Body of pancreas (tissue), 4 donors: ENCODE measurements at regions of chrX and their contacts with region 1.

Region 1: DNA sequence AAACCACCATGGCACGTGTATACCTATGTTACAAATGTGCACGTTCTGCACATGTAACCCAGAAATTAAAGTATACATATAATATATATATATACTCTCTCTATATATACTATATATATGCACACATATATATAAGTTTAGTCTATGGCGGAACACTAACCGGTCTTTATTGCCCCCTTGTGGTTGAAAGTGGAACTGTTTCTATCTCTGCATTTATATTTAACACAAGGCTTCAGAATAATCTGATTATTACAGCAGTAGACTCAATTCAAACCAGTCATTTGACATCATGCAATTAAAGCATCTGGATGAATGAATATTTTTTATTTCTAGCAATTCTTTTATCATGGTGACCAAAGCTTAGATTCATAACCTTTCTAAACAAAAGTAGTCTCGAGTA is 14.6 kb downstream of the RAB9B start:
- DNase-seq: peak in 1 of 4 donors; percentile 12
- ATAC-seq: no peak
- H3K4me3 ChIP-seq: no peak overlapping the region
- H3K27ac ChIP-seq: no peak overlapping the region
- H3K4me1 ChIP-seq: no peaks in the 10 kb centered on the region
- H3K27me3 ChIP-seq: no peaks in the 10 kb centered on the region
- CTCF ChIP-seq: peak; percentile 52 to 81 (median 58)
- POLR2A ChIP-seq: no peak

Region 2: GRCh38 chrX:103538734-103539141 is 278.8 kb before region 1 on chrX:
- intact Hi-C with region 1: loop called (anchors 5 kb)
- DNase-seq: peak in 2 of 4 donors; percentile 6 to 12
- ATAC-seq: peak; percentile 68
- H3K4me3 ChIP-seq: no peak overlapping the region
- H3K27ac ChIP-seq: no peak overlapping the region
- H3K4me1 ChIP-seq: no peaks in the 10 kb centered on the region
- H3K27me3 ChIP-seq: no peaks in the 10 kb centered on the region
- CTCF ChIP-seq: no peak
- POLR2A ChIP-seq: no peak

Region 3: DNA sequence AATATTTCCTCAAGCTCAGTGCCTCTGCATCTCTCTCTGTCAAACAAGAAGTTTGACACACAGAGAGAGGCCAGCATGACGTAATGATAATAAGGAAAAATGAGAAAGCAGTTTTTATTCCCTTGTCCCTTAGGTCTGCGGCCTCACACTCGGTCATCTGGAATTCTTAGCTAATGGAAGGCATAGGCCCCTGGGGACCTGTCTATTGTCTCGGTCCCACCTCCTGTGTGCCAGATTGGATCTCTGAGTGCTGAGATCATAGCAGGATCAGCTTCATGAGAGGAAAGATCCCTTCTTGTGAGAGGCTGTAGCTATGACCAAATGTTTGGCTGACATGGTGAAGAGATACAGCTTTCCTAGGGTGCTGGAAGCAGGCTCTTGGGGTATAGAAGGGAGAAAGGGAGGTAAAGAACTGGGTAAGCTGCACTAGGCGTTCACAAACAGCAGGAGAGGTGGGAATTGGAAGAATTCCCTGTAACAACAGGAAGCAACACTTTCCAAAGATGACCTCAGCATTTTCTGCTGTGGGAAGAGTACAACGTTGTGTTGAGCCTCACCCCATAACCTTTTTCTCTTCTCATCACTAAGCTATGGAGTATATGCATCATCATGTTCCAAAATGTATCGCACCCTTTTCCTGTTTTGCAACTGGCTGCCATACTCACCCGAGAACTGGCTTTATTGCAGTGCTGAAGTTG is 86.6 kb before region 1 on chrX:
- intact Hi-C with region 1: no loop called
- DNase-seq: peak in 1 of 4 donors; percentile 2
- ATAC-seq: no peak
- H3K4me3 ChIP-seq: no peak overlapping the region
- H3K27ac ChIP-seq: no peak overlapping the region
- H3K4me1 ChIP-seq: no peaks in the 10 kb centered on the region
- H3K27me3 ChIP-seq: no peaks in the 10 kb centered on the region
- CTCF ChIP-seq: no peak
- POLR2A ChIP-seq: no peak

Region 4: GRCh38 chrX:104047171-104047570 is 229.7 kb after region 1 on chrX:
- intact Hi-C with region 1: no loop called
- DNase-seq: no peak
- ATAC-seq: no peak
- H3K4me3 ChIP-seq: no peak overlapping the region
- H3K27ac ChIP-seq: no peak overlapping the region
- H3K4me1 ChIP-seq: no peaks in the 10 kb centered on the region
- H3K27me3 ChIP-seq: no peaks in the 10 kb centered on the region
- CTCF ChIP-seq: no peak
- POLR2A ChIP-seq: no peak